ENCODE measurements at regions of chr18 and their contacts with region 1.

Region 1: DNA sequence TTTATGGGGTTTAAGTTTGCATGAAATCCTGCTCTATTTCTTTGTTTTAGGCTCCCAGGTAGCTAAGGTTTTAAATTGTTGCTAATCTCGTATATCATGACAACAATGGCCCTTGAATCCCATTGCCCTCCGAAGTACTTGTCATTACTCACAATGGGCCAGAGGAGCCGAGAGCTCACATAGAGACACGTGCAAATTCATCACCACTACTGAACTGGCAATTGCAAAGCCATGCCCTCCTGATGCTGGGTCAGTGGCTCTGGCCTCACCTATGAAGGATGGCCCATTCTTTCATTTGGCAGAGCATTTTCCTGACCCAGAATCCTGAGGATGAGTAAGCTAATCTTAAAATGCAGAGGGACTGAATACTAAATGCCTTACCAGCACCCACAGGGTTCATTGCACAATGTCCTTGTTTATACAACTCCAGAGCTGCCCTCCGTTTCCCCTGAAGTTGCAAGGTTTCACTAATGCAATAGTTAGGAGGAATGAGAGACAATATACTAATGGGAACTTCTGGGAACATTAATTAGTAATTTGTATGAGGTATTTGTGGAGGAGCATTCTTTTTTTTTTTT is 71.6 kb upstream of the GAREM1 start:
- DNase-seq: peak; percentile 93
- H3K4me3 Mint-ChIP-seq: peak overlapping the region; percentile 62
- H3K27ac Mint-ChIP-seq: peak overlapping the region; percentile 17
- H3K4me1 Mint-ChIP-seq: peaks cover 29% of the 10 kb centered on the region
- H3K27me3 Mint-ChIP-seq: no peaks in the 10 kb centered on the region
- CTCF ChIP-seq: no peak

Region 2: DNA sequence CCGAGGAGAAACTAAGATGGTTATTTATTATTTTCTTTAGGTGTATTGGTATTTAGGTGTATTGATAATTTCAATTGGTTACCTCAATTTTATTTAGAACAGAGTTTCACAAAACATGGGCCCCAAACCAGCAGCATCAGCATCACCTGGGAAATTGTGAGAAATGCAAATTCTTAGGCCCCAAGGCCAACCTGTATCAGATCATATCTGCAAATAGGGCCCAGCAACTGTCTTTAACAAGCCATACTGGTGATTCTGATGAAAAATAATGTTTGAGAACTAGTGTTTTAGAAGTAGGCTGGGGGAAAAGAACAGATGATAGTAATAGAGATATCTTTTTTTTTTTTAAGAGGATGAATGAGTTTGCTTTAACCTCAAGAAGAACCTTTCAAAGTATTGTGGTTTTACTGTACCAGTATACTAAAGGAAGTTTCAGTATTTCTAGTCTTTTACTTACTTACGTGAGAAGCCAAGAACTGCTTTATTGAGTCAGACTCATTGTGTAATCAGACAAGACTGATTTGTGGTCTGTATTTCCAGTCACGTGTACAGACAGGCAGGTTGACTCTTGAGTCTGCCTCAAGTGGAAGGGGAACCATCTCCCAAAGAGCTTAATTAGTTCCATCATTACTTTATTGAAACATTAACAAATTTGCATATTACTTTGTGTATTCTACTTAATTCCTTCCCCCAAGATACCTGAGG is 11.2 kb before region 1 on chr18:
- CTCF ChIA-PET with region 1: interaction called, 8 read pairs
- POLR2A ChIA-PET with region 1: interaction called, 27 read pairs
- intact Hi-C with region 1: no loop called
- DNase-seq: peak; percentile 93
- H3K4me3 Mint-ChIP-seq: no peak overlapping the region
- H3K27ac Mint-ChIP-seq: no peak overlapping the region
- H3K4me1 Mint-ChIP-seq: peaks cover 22% of the 10 kb centered on the region
- H3K27me3 Mint-ChIP-seq: no peaks in the 10 kb centered on the region
- CTCF ChIP-seq: no peak